ENCODE measurements at regions of chr9 and their contacts with region 1.

Region 1: GRCh38 chr9:135085830-135086546 is 1.5 kb upstream of the OLFM1 start:
- DNase-seq: peak; percentile 54
- ATAC-seq: peak; percentile 77
- H3K4me3 ChIP-seq: peak overlapping the region in 1 of 2 experiments; percentile 15; a peak in 1 of 4 replicates
- H3K27ac ChIP-seq: no peak overlapping the region
- H3K4me1 ChIP-seq: peaks cover 4 to 5% of the 10 kb centered on the region in 2 experiments; a peak in 2 of 4 replicates
- H3K27me3 ChIP-seq: peaks cover 20% of the 10 kb centered on the region; the same call in 1 of the 2 replicates
- CTCF ChIP-seq: peak; percentile 92 to 98 (median 95)
- POLR2A ChIP-seq: no peak
- RAD21 ChIP-seq: peak; percentile 98

Region 2: DNA sequence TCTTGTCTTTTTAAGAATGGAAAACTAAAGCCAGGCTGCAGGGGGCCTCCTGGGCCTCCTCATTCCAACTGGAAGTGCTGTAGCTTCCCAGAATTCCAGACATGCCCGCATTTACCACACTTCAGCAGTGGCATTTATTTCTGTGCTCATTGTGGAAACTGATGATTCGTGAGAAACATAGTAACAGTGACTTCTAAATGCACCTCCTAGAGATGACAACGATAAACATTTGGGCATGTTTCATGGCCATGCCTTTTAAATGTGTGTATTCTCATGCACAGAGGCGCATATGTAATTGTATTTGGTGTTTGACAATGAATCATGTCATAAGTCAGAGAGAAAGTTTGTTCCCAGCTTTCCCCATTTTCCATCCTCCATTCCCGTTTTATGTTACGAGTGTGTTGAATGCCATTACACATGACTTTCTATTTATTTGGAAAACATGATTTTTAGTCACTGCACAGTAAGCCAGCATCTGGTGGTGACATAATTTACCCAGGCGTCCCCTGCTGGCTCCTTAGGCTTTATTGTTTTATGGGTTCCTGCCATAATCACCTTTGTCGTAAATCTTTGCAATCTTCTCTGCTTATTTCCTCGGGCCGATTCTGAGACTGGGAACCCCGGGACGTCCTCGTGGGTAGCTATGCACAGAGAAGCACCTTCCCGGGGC is 274.2 kb before region 1 on chr9:
- CTCF ChIA-PET with region 1: no interaction called
- POLR2A ChIA-PET with region 1: no interaction called
- RAD21 ChIA-PET with region 1: no interaction called
- intact Hi-C with region 1: no loop called
- DNase-seq: no peak
- ATAC-seq: no peak
- H3K4me3 ChIP-seq: no peak overlapping the region
- H3K27ac ChIP-seq: no peak overlapping the region
- H3K4me1 ChIP-seq: no peaks in the 10 kb centered on the region; a peak in 1 of 4 replicates
- H3K27me3 ChIP-seq: peaks cover 12% of the 10 kb centered on the region
- CTCF ChIP-seq: no peak
- POLR2A ChIP-seq: no peak
- RAD21 ChIP-seq: no peak

Region 3: GRCh38 chr9:135253305-135254004 is 167.5 kb after region 1 on chr9:
- CTCF ChIA-PET with region 1: no interaction called
- POLR2A ChIA-PET with region 1: no interaction called
- RAD21 ChIA-PET with region 1: no interaction called
- intact Hi-C with region 1: loop called (anchors 10 kb)
- DNase-seq: peak; percentile 23
- ATAC-seq: peak; percentile 89
- H3K4me3 ChIP-seq: peak overlapping the region; percentile 9 to 25
- H3K27ac ChIP-seq: no peak overlapping the region; the same call in 1 of the 2 replicates
- H3K4me1 ChIP-seq: peaks cover 9 to 24% of the 10 kb centered on the region in 2 experiments; a peak in 3 of 4 replicates
- H3K27me3 ChIP-seq: no peaks in the 10 kb centered on the region
- CTCF ChIP-seq: no peak
- POLR2A ChIP-seq: no peak
- RAD21 ChIP-seq: no peak

Region 4: DNA sequence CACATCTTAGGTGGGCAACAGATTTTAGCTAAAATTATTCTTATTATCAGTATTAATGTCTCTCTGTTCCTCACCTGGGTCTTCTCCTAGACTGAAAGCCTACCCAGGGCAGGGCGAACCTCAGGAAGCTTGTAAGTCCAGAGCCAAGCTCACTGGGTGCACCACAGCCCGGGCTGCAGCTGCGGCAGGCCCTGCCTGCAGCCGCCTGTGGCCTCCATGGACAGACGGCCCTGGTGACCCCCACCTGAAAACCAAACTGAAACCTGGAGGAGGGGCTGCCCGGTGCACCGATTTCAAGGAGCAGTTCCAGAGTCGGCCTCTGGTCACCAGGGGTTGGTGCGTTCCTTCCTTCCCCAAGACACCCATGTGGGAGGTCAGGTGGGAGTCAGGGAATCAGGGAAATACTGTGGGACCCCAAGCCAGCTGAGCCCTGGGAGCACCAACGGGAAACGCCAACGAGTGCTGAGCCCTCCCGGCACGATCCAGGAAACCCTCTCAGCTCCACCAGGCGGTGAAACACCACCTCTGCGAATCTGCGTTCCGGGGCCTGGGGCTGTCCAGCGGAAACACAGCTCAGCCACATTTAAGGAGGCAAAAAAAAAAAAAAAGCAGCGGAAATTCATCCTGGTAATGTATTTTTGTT is 325.0 kb after region 1 on chr9:
- CTCF ChIA-PET with region 1: interaction called, 16 read pairs
- POLR2A ChIA-PET with region 1: no interaction called
- RAD21 ChIA-PET with region 1: interaction called in 1 of 2 experiments, 3 read pairs
- intact Hi-C with region 1: loop called (anchors 1 kb)
- DNase-seq: no peak
- ATAC-seq: no peak
- H3K4me3 ChIP-seq: no peak overlapping the region
- H3K27ac ChIP-seq: no peak overlapping the region
- H3K4me1 ChIP-seq: peaks cover 3 to 4% of the 10 kb centered on the region in 2 experiments; a peak in 2 of 4 replicates
- H3K27me3 ChIP-seq: peaks cover 14% of the 10 kb centered on the region; the same call in 1 of the 2 replicates
- CTCF ChIP-seq: no peak
- POLR2A ChIP-seq: no peak
- RAD21 ChIP-seq: no peak

Region 5: DNA sequence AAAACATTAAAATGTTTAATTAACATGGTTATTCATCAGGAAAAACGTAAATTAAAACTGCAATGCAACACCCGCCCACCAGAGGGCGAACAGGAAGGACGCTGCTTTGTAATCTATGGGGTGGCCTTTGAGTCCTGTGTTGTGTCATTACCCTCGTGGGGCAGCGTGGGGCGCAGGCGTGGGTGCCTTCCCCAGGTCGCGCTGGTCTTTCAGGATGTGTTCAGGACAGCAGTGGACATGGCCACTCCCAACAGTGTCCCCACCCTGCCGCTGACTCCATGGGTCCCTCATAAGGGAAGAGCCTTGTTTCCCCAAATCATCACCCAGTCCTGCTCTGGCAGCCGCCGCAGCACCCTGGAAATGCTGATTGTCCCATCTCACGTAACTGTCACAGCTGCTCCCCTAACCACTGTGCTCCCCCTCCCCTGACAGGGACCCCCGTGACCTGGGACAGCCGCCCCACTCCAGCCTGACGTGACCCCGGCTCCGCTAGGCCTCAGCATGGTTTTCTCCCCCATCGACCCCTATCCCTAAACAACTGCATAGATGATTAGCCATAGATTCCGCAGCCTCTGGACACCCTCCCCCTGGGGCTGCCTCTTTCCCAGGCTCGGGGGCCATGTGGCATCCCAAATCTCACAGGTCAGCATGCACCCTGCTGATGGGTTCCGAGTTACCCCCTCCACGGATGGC is 516.9 kb after region 1 on chr9:
- CTCF ChIA-PET with region 1: no interaction called
- POLR2A ChIA-PET with region 1: no interaction called
- RAD21 ChIA-PET with region 1: no interaction called
- intact Hi-C with region 1: loop called (anchors 2 kb)
- DNase-seq: peak; percentile 29
- ATAC-seq: peak; percentile 66
- H3K4me3 ChIP-seq: no peak overlapping the region
- H3K27ac ChIP-seq: no peak overlapping the region
- H3K4me1 ChIP-seq: peaks cover 0 to 4% of the 10 kb centered on the region in 2 experiments; a peak in 2 of 4 replicates
- H3K27me3 ChIP-seq: no peaks in the 10 kb centered on the region
- CTCF ChIP-seq: peak; percentile 71 to 75 (median 75)
- POLR2A ChIP-seq: no peak
- RAD21 ChIP-seq: peak; percentile 45

Measured in HCT116 (cell line).